Stomach (tissue), 19 donors: ENCODE measurements at regions of chr12 and their contacts with region 1.

Region 1: GRCh38 chr12:133037207-133038005 is at the start of gene ZNF84:
- DNase-seq: peak; percentile 96 to 99
- H3K4me3 ChIP-seq: peak within 1 kb of the TSS; percentile 68 to 80 (median 76)
- H3K27ac ChIP-seq: peak within 1 kb of the TSS; percentile 93 to 98 (median 96)
- H3K4me1 ChIP-seq: peaks cover 4 to 15% (median 12%) of the 10 kb centered on the region in 4 donors
- H3K27me3 ChIP-seq: no peaks in the 10 kb centered on the region
- CTCF ChIP-seq: no peak
- EP300 ChIP-seq: no peak
- POLR2A ChIP-seq: no peak
- total RNA-seq, gene ZNF84: 10.5 to 53.3 (median 20.1) TPM

Region 2: GRCh38 chr12:132986001-132986912 is 51.1 kb before region 1 on chr12 and contains the start of gene ZNF26:
- intact Hi-C with region 1: loop called (anchors 10 kb)
- DNase-seq: peak; percentile 91 to 98
- H3K4me3 ChIP-seq: peak within 1 kb of the TSS; percentile 77 to 99 (median 86)
- H3K27ac ChIP-seq: peak within 1 kb of the TSS; percentile 80 to 91 (median 89)
- H3K4me1 ChIP-seq: peaks cover 10 to 22% (median 19%) of the 10 kb centered on the region in 4 donors
- H3K27me3 ChIP-seq: no peaks in the 10 kb centered on the region
- CTCF ChIP-seq: no peak
- EP300 ChIP-seq: no peak
- POLR2A ChIP-seq: peak in 1 of 4 donors; percentile 55
- total RNA-seq, gene ZNF26: 1.8 to 30.3 (median 4.5) TPM

Region 3: DNA sequence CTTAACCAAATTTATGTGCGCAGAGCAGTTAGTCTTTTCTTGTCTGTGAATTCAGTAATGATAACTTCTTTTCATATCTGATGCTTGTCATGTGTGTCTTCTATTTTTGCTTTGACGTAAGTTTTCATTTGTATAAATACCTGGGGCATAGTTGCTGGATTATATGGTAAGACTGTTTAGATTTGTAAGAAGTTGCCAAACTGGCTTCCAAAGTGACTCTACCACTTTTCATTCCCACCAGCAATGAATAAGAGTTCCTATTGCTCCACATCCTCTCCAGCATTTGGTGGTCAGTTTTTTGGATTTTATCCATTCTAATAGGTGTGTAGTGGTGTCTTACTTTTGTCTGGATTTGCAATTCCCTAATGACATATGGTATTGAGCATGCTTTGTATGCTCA is 152.8 kb after region 1 on chr12:
- intact Hi-C with region 1: no loop called
- DNase-seq: no peak
- H3K4me3 ChIP-seq: no peak overlapping the region
- H3K27ac ChIP-seq: no peak overlapping the region
- H3K4me1 ChIP-seq: no peaks in the 10 kb centered on the region
- H3K27me3 ChIP-seq: no peaks in the 10 kb centered on the region
- CTCF ChIP-seq: no peak
- EP300 ChIP-seq: no peak
- POLR2A ChIP-seq: no peak